ENCODE measurements at regions of chr17 and their contacts with region 1.

Region 1: DNA sequence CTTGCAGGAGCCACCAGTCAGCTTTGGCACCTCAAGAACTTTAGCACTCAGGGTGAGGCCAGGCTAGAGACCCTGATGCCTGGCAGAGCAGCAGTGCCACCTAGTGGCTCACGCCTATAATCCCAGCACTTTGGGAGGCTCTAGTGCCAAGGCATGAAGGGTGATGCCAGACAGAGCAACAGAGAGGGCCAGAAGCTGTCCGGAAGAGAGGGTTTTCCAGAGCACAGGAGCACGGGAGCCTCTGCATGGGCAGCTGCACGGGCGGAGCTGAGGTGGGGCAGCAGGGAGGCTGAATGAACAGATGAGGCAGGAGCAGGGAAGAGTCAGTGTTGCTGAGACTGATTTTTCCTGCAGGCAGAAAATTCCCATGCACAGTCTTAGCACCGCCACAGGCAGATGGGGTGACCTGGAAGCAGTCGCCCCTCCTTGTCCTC is 38.9 kb downstream of the MYH3 start:
- DNase-seq: peak; percentile 86

Region 2: DNA sequence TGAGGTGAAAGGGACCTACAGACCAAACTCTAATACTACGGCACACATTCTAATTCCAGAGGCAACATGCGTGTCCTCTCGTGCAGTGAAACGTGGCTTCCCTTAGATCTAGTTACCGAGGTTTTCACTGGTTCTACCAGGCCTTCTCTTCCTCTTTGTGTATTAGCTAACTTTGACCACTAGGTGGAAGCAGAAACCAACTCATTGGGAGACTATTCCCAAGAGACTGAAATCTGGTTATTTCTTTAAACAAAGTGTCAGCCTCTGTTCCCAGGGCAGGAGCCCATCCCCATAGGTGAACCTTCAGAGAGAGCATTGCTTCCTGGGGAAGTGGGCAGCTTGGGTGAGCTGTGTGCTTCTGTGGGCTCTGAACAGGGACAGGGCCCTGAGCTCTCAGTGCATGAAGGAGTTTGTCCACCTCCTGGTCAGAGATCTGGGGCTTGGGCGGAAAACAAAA is 693.5 kb before region 1 on chr17:
- intact Hi-C with region 1: loop called in 1 of 2 experiments (anchors 10 kb)
- DNase-seq: no peak

Region 3: DNA sequence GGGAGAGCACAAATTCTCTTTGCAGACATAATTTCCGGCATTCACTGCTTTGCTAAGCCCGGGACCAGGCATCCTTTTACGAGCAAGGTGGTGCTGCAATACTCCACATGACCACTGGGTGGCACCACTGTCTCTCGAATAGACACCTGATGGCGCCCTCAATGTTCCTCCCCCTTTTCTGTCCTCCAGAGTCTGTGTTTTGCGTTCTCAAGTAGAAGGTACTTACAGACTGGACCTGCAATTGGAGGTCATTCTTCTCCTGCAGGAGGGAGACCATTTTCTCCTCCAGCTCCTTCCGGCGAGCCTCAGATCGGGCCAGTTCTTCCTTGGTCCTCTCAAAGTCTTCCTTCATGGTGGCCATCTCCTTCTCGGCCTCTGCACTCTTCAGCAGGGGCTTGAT is 290.6 kb before region 1 on chr17:
- intact Hi-C with region 1: loop called (anchors 5 to 10 kb)
- DNase-seq: peak; percentile 92

Region 4: GRCh38 chr17:10337976-10338375 is 280.2 kb before region 1 on chr17:
- intact Hi-C with region 1: loop called in 1 of 2 experiments (anchors 10 kb)
- DNase-seq: no peak

Measured in posterior vena cava (tissue), 2 donors.